ENCODE measurements at regions of chr1 and their contacts with region 1.

Region 1: DNA sequence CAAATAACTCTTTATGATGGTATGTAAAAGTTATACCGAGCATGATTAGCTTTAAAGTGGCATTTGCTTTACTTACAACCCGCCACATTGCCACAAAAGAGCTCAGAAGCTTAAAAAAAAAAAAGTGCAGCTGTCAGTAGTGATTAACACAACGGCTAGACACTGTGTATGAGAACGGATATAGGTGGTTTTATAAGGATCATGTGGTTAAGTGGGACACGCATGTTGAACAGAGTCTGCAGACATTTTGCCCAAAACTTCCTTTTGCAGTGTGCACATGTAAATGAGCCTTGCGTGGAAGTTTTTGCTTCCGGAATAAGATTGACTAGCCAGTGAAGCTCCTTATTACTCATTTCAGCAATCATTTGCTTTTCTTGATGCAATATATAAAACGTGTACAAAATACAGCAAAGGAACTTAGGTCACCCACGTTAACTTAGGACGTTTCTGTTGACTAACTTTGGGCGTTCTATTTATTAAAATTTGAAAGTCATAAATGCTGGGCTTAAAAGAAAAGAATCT is 58.7 kb upstream of the RGS1 start:
- DNase-seq: peak; percentile 89
- H3K4me3 Mint-ChIP-seq: peak overlapping the region; percentile 81
- H3K27ac Mint-ChIP-seq: peak overlapping the region; percentile 89
- H3K4me1 Mint-ChIP-seq: peaks cover 40% of the 10 kb centered on the region
- H3K27me3 Mint-ChIP-seq: no peaks in the 10 kb centered on the region

Region 2: DNA sequence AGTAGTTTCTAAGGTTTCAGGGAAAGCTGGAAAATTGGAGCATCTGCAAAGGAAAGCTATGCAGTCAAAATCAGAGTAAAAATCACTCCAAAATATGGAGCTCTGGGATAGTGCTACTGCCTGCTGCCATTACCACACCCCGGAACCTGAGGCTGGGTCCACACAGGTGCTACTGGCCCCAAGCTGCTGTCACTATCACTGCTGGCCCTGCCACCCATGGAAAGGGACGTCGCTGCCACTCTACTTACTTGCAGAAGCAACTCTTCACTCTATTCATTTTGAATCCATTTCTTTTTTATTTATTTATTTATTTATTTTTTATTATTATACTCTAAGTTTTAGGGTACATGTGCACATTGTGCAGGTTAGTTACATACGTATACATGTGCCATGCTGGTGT is 418.8 kb before region 1 on chr1:
- intact Hi-C with region 1: no loop called
- DNase-seq: no peak
- H3K4me3 Mint-ChIP-seq: no peak overlapping the region
- H3K27ac Mint-ChIP-seq: no peak overlapping the region
- H3K4me1 Mint-ChIP-seq: no peaks in the 10 kb centered on the region
- H3K27me3 Mint-ChIP-seq: no peaks in the 10 kb centered on the region

Region 3: DNA sequence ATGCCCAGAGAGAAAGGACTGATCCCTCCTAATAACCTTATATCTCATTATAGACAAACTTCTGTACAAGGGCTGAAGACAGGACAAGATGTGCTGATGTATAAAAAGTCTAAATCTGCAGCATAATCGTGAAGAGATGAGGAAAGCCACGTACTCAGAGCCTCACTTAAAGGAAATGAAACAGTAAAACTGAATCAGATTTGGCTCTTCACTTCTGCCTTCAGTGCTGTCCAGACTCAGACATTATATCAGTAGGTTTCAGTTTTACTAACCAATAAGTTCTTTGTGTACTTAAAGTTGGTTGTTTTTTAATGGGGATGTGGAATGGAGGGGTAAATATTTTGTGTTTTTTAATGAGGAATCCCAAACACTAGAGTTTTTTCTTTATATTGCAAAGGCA is 13.4 kb after region 1 on chr1:
- intact Hi-C with region 1: loop called (anchors 1 kb)
- DNase-seq: peak; percentile 62
- H3K4me3 Mint-ChIP-seq: peak overlapping the region; percentile 53
- H3K27ac Mint-ChIP-seq: peak overlapping the region; percentile 42
- H3K4me1 Mint-ChIP-seq: peaks cover 23% of the 10 kb centered on the region
- H3K27me3 Mint-ChIP-seq: peaks cover 2% of the 10 kb centered on the region

Region 4: DNA sequence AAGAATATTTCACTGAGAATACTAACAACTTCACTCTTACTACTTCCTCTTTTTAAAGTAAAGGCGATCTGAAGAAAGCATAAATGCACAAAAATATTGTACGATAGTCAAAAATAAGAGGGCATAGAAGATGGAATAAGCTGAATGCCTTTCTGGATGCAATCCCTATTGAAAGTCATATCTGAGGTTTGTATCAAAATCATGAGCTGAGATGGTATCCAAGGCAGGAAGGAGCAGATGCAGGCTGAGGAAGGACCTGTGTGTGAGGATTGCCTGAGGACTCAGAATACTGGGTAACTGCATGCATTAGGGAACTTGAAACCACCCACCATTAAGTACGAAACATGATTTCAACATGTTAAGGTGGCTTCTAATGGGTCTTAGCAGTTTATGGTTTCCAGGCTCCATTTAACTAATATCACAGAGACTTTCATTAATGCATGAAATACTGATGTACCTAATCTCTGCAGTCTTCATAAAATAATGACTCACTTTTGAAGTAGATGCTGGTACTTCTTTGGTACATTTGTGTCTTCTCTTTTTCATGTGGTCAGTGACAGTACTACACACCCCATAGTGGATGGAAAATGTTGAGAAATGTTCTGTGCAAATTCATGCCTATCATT is 29.2 kb after region 1 on chr1:
- intact Hi-C with region 1: loop called (anchors 1 kb)
- DNase-seq: no peak
- H3K4me3 Mint-ChIP-seq: peak overlapping the region; percentile 14
- H3K27ac Mint-ChIP-seq: peak overlapping the region; percentile 56
- H3K4me1 Mint-ChIP-seq: peaks cover 51% of the 10 kb centered on the region
- H3K27me3 Mint-ChIP-seq: no peaks in the 10 kb centered on the region

Region 5: DNA sequence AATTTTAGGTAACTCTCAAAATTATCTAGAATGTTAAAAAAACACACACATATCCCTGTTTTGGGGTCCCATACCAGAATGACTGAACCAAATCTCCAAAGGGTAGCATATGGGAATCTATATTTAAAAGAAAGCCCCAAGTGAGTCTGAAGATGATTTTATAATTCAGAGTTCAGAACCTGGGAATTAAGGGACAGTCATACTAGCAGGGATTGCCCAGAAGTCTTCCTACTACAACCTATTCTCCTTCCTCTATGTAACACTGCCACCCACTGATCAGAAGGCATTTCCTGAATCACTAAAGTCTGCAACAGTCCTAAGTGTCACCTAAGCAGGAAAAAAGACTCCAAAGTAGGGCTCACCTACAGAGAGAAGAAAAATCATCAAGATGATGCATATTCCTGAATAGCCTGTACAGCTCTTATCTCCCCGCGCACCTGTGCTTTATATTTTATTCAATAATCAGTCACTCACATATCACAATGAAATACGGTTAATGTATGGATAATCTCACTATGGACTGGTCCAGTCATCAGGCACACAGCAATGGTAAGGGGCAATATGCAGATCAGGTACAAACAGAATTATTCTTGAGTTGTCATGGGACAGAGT is 63.6 kb after region 1 on chr1:
- intact Hi-C with region 1: loop called (anchors 1 kb)
- DNase-seq: peak; percentile 78
- H3K4me3 Mint-ChIP-seq: peak overlapping the region; percentile 19
- H3K27ac Mint-ChIP-seq: no peak overlapping the region
- H3K4me1 Mint-ChIP-seq: peaks cover 37% of the 10 kb centered on the region
- H3K27me3 Mint-ChIP-seq: peaks cover 9% of the 10 kb centered on the region